Heart left ventricle (tissue), 16 donors: ENCODE measurements at regions of chr18 and their contacts with region 1.

Region 1: GRCh38 chr18:46281185-46282176 is 177.3 kb downstream of the HAUS1 start:
- DNase-seq: peak; percentile 57 to 76 (median 63)
- ATAC-seq: peak; percentile 80 to 94 (median 84)
- H3K4me3 ChIP-seq: no peak overlapping the region
- H3K27ac ChIP-seq: no peak overlapping the region
- H3K4me1 ChIP-seq: peaks cover 0 to 19% (median 9%) of the 10 kb centered on the region in 12 donors
- H3K27me3 ChIP-seq: no peaks in the 10 kb centered on the region
- CTCF ChIP-seq: peak; percentile 84 to 98 (median 94)
- POLR2A ChIP-seq: no peak

Region 2: GRCh38 chr18:46411867-46412690 is 130.6 kb after region 1 on chr18:
- intact Hi-C with region 1: loop called in 1 of 10 experiments (anchors 10 kb)
- DNase-seq: peak in 4 of 5 donors; percentile 58 to 71 (median 62)
- ATAC-seq: peak; percentile 73 to 82 (median 76)
- H3K4me3 ChIP-seq: peak overlapping the region in 2 of 12 donors; percentile 9 to 22
- H3K27ac ChIP-seq: peak overlapping the region; percentile 35 to 98 (median 82)
- H3K4me1 ChIP-seq: peaks cover 4 to 91% (median 45%) of the 10 kb centered on the region in 12 donors
- H3K27me3 ChIP-seq: no peaks in the 10 kb centered on the region
- CTCF ChIP-seq: no peak
- POLR2A ChIP-seq: no peak

Region 3: DNA sequence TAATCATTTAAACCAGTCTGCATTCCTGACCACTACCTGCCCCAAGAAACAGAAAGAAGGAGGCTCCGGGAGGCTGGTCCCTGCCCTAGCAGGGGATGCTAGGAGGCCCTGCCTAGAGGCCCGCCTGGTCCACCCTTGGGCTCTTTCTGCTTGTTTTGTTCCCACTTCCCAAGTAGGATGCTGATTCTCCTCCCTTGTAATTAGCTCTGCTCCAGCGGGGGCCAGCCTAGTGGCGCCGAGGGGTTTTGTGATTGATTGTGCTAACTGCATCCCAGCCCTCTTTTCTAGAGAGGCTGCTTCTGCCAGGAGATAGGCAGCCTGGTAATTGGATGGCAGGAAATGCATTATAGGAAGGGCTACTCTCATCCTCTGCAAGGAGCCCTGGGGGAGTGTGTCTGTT is 155.6 kb after region 1 on chr18:
- intact Hi-C with region 1: loop called in 1 of 10 experiments (anchors 5 kb)
- DNase-seq: no peak
- ATAC-seq: no peak
- H3K4me3 ChIP-seq: no peak overlapping the region
- H3K27ac ChIP-seq: no peak overlapping the region
- H3K4me1 ChIP-seq: no peaks in the 10 kb centered on the region
- H3K27me3 ChIP-seq: no peaks in the 10 kb centered on the region
- CTCF ChIP-seq: no peak
- POLR2A ChIP-seq: no peak

Region 4: DNA sequence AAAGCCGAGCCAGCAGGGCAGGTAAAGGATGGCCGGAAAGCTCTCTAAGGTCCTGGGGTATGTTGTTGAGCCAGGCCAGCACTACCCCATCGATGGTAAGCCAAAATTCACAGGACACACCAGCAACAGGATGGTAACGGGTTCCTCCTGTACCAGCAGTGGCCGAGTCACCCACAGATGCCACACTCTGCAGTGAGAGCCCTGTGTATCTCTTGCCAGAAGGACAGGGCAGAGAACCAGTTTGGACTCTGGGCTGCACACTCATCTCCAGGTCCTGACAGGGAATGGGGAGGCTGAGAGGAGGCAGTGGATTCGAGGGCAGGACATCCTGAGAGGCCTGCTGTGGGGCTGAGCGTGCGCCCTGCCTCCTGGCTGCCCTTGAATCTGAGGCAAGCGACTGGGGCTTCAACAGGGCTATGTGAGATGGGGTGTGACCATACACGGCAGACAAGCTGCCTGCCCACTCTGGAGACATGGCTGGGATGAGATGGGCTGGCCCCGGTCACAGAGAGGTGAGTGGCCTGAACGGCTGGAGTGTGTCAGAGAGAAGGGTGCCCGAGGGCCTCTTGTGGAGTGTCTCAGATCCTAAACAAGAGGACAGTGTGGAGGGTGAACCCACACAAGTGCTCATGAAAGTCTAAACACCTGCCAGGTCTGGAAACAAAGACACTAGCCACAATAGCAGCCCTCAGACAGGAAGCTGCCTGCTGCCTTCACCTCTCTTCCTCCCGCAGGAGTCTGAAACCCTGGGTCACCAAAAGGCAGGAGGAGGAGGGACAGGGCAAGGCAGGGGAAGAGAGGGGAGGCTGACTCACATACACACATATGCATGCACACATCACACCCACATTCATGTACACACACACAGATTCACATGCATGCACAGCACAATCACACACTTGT is 193.3 kb after region 1 on chr18:
- intact Hi-C with region 1: loop called in 1 of 10 experiments (anchors 5 kb)
- DNase-seq: no peak
- ATAC-seq: peak; percentile 22 to 48 (median 36)
- H3K4me3 ChIP-seq: no peak overlapping the region
- H3K27ac ChIP-seq: no peak overlapping the region
- H3K4me1 ChIP-seq: peaks cover 0 to 14% (median 0%) of the 10 kb centered on the region in 12 donors
- H3K27me3 ChIP-seq: no peaks in the 10 kb centered on the region
- CTCF ChIP-seq: no peak
- POLR2A ChIP-seq: no peak

Region 5: DNA sequence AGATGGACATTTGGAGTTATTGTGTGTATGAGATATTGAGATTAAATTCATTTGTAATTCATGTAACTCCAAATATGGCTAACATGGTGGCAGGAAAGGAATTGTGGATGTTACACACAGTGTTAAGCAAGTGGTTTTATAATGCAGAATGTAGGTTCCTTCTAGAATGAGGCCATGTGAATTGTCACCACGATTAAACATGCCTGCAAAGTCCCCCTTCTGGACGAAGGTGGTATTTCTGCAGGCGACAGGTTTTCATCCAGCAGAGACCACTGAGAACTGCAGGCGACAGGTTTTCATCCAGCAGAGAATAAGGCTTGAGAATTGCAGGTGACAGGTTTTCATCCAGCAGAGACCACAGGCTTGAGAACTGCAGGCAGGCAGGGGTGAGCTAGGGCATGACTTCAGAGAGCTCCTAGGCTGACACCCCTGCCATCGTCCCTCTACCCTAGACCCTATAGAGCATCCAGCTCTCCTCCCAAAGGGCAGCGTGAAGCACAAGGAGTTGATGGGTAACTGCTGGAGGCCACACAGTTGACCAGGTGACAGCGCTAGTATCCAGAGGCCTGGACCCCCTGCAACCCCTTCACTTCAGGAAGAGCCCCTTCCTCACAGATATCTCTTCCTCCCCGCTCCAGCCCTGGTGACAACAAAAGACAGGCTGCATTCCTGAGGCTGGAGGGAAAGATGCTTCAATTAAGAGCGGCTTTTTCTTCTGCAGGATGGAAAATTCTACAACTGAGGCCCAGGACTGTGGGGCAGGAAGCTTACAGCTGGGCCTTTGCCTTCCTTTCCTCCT is 199.8 kb after region 1 on chr18:
- intact Hi-C with region 1: loop called (anchors 2 to 10 kb)
- DNase-seq: peak in 2 of 5 donors; percentile 26 to 45
- ATAC-seq: peak in 2 of 4 donors; percentile 53 to 61
- H3K4me3 ChIP-seq: no peak overlapping the region
- H3K27ac ChIP-seq: no peak overlapping the region
- H3K4me1 ChIP-seq: peaks cover 0 to 10% (median 0%) of the 10 kb centered on the region in 12 donors
- H3K27me3 ChIP-seq: no peaks in the 10 kb centered on the region
- CTCF ChIP-seq: peak; percentile 59 to 81 (median 70)
- POLR2A ChIP-seq: no peak

Region 6: GRCh38 chr18:46518438-46518837 is 237.0 kb after region 1 on chr18:
- intact Hi-C with region 1: loop called (anchors 1 to 10 kb)
- DNase-seq: peak in 4 of 5 donors; percentile 23 to 68 (median 52)
- ATAC-seq: peak; percentile 84 to 97 (median 94)
- H3K4me3 ChIP-seq: no peak overlapping the region
- H3K27ac ChIP-seq: no peak overlapping the region
- H3K4me1 ChIP-seq: no peaks in the 10 kb centered on the region
- H3K27me3 ChIP-seq: no peaks in the 10 kb centered on the region
- CTCF ChIP-seq: peak in 11 of 12 donors; percentile 31 to 61 (median 49)
- POLR2A ChIP-seq: no peak

Region 7: GRCh38 chr18:46660955-46661749 is 379.7 kb after region 1 on chr18:
- intact Hi-C with region 1: loop called in 9 of 10 experiments (anchors 2 to 10 kb)
- DNase-seq: no peak
- ATAC-seq: peak in 2 of 4 donors; percentile 32 to 36
- H3K4me3 ChIP-seq: no peak overlapping the region
- H3K27ac ChIP-seq: no peak overlapping the region
- H3K4me1 ChIP-seq: no peaks in the 10 kb centered on the region
- H3K27me3 ChIP-seq: peaks cover 0 to under 1% (median 0%) of the 10 kb centered on the region in 9 donors
- CTCF ChIP-seq: no peak
- POLR2A ChIP-seq: no peak